ENCODE measurements at regions of chr3 and their contacts with region 1.

Region 1: GRCh38 chr3:170414202-170414663 is 4.4 kb upstream of the CLDN11 start:
- DNase-seq: no peak
- H3K4me3 ChIP-seq: no peak overlapping the region
- H3K27ac ChIP-seq: no peak overlapping the region
- H3K4me1 ChIP-seq: peaks cover 4 to 12% (median 11%) of the 10 kb centered on the region in 4 donors
- H3K27me3 ChIP-seq: peaks cover 34% of the 10 kb centered on the region
- CTCF ChIP-seq: peak; percentile 86 to 96 (median 89)
- EP300 ChIP-seq: no peak
- POLR2A ChIP-seq: no peak

Region 2: GRCh38 chr3:170055209-170055608 is 359.0 kb before region 1 on chr3:
- in situ Hi-C with region 1: no loop called
- intact Hi-C with region 1: no loop called
- DNase-seq: no peak
- H3K4me3 ChIP-seq: no peak overlapping the region
- H3K27ac ChIP-seq: no peak overlapping the region
- H3K4me1 ChIP-seq: peaks cover 0 to 19% (median 0%) of the 10 kb centered on the region in 4 donors
- H3K27me3 ChIP-seq: no peaks in the 10 kb centered on the region
- CTCF ChIP-seq: no peak
- EP300 ChIP-seq: no peak
- POLR2A ChIP-seq: no peak

Region 3: GRCh38 chr3:170689893-170690660 is 275.8 kb after region 1 on chr3:
- in situ Hi-C with region 1: loop called in 2 of 4 experiments (anchors 10 to 25 kb)
- intact Hi-C with region 1: no loop called
- DNase-seq: peak; percentile 65
- H3K4me3 ChIP-seq: no peak overlapping the region
- H3K27ac ChIP-seq: no peak overlapping the region
- H3K4me1 ChIP-seq: no peaks in the 10 kb centered on the region
- H3K27me3 ChIP-seq: no peaks in the 10 kb centered on the region
- CTCF ChIP-seq: peak; percentile 64 to 73 (median 71)
- EP300 ChIP-seq: no peak
- POLR2A ChIP-seq: no peak

Measured in transverse colon (tissue), 4 donors.